ENCODE measurements at regions of chr4 and their contacts with region 1.

Region 1: DNA sequence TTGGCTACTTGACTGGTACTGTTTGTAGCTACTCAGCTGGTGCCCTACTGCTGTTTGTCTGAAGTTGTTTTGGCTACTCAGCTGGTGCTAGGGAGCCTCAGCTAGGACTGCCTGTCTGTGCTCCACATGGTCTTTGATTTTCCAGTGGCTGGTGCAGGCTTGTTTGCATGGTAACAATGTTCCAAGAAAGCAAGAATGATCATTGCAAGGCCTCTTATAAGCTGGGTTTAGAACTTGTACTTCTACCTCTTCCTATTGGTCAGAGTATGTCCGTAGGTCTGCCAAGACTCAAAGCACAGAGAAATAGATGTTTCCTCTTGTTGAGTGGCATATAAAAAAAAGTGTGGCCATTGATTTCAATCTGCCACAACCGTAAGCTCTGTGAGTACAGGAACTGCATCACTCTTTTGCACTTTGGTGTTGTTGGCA is 17.6 kb downstream of the NFKB1 start:
- DNase-seq: peak in 4 of 5 donors; percentile 10 to 73 (median 61)
- H3K4me3 ChIP-seq: peak overlapping the region; percentile 34
- H3K4me3 Mint-ChIP-seq: peak overlapping the region in 6 of 7 donors; percentile 29 to 63 (median 49)
- H3K27ac ChIP-seq: no peak overlapping the region
- H3K27ac Mint-ChIP-seq: peak overlapping the region; percentile 69 to 96 (median 92)
- H3K4me1 ChIP-seq: peaks cover 61% of the 10 kb centered on the region
- H3K4me1 Mint-ChIP-seq: peaks cover 66 to 92% (median 85%) of the 10 kb centered on the region in 3 donors
- H3K27me3 ChIP-seq: no peaks in the 10 kb centered on the region
- H3K27me3 Mint-ChIP-seq: peaks cover 0 to 2% of the 10 kb centered on the region in 2 donors

Region 2: DNA sequence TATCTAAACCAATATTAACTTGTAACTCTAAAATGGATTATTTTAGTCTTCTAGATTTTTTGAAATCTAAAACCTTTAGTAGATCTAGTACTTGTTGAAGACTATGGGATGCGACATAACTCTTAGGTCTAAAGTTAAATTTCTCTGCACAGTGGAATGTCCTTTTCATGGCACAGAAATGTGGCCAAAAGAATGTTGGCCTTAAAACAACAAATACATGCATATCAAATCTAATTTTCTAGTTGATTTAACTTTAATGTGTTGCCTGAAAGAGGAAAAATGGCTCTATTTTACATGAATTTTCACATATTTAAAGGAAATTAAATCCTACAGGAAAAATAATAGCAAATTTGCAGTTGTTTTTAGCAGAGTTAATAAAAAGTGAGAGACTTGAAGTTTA is 12.7 kb after region 1 on chr4:
- CTCF ChIA-PET with region 1: no interaction called
- POLR2A ChIA-PET with region 1: no interaction called
- DNase-seq: no peak
- H3K4me3 ChIP-seq: no peak overlapping the region
- H3K4me3 Mint-ChIP-seq: no peak overlapping the region
- H3K27ac ChIP-seq: no peak overlapping the region
- H3K27ac Mint-ChIP-seq: peak overlapping the region in 1 of 8 donors; percentile 35
- H3K4me1 ChIP-seq: peaks cover 46% of the 10 kb centered on the region
- H3K4me1 Mint-ChIP-seq: peaks cover 66 to 92% (median 87%) of the 10 kb centered on the region in 3 donors
- H3K27me3 ChIP-seq: no peaks in the 10 kb centered on the region
- H3K27me3 Mint-ChIP-seq: no peaks in the 10 kb centered on the region

Region 3: DNA sequence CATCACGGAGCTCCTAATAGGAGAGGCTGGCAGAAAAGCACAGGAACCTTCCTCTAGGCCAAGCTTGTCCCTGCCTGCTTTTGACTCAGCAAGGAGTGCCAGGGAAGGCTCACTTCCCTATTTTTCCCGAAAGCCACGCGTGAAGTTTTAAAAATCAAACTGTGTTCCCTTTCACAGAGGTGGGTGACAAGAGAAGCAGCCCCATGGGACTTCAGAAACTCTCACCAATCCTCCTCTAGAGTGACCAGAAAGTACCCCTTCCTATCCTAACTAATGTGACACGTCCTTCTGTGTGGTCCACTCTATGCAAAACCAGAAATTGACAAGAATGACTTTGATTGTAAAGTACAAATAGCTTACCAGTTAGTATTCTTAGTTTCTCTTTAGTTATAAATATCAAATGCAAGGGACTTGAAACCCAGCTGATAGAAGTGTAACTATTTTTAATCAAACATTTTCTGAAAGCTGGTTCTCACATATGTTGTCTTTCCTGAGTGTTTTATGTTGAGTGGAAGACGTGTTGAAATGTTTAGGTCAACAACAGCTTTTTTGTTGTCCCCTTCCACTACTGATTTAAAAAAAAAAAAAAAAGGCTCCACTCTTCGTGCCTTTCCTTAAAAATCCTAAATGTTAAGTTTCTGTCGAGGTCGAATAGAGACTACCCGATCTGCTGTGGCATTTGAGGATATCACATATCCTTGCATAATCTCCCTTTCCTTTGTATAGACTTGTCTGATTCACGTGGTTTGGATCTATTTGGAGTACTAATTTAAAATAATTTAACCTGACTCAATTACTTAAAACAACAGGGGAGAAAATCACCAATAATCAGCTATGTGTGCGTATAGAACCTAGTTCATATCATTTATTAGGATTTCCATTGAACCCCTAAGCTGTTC is 24.6 kb after region 1 on chr4:
- CTCF ChIA-PET with region 1: no interaction called
- POLR2A ChIA-PET with region 1: interaction called, 10 read pairs
- DNase-seq: no peak
- H3K4me3 ChIP-seq: no peak overlapping the region
- H3K4me3 Mint-ChIP-seq: peak overlapping the region in 1 of 7 donors; percentile 14
- H3K27ac ChIP-seq: no peak overlapping the region
- H3K27ac Mint-ChIP-seq: no peak overlapping the region
- H3K4me1 ChIP-seq: peaks cover 7% of the 10 kb centered on the region
- H3K4me1 Mint-ChIP-seq: peaks cover 30 to 66% (median 51%) of the 10 kb centered on the region in 3 donors
- H3K27me3 ChIP-seq: no peaks in the 10 kb centered on the region
- H3K27me3 Mint-ChIP-seq: peaks cover 0 to 1% of the 10 kb centered on the region in 2 donors